HCT116 (cell line): ENCODE measurements at regions of chr18 and their contacts with region 1.

Region 1: GRCh38 chr18:48345596-48345995 is 63.6 kb downstream of the ZBTB7C start:
- DNase-seq: peak; percentile 12
- ATAC-seq: peak; percentile 75
- H3K4me3 ChIP-seq: no peak overlapping the region
- H3K27ac ChIP-seq: no peak overlapping the region
- H3K4me1 ChIP-seq: no peaks in the 10 kb centered on the region
- H3K27me3 ChIP-seq: no peaks in the 10 kb centered on the region
- CTCF ChIP-seq: peak; percentile 49 to 72 (median 56)
- POLR2A ChIP-seq: no peak
- RAD21 ChIP-seq: peak; percentile 77

Region 2: DNA sequence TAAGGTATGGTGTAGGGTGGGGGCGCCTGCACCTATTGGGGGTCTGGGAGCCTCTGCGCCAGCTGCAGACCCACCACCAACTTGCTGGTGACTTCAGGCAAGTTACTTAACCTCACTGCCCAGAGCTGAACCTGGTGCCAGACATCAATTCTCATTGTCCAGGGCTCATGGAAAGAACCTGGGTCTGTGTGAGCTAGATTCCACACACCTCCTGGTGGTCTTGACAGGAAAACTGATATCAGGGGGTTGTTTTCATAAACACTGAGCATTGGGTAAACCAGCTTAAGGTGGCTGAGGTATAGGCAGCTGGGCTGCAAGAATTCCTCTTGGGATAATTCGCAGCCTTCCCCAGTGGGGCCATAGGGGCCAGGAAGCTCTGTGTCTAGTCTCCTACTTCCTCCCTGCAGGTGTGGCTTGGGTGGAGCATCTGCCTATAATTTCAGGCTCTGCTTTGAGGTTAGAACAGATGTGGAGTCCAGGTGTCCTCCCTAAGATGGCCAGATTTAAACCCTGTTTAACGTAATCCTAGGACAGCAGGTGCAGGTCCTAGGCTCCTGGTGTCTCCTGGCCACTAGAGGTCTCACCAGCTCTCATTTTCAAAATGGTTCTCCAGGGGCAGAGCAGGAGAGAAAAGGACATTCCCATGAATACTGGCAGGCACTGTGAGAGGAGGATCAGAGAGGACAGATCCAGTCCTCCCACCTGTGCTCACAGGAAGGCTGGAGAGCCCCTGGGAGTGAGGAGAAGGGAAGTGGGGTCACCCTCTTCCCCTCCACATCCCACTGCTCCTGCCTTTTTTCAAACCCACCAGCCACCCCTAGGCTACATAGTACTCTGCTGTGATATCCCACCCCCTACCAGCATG is 314.7 kb before region 1 on chr18:
- CTCF ChIA-PET with region 1: interaction called, 3 read pairs
- POLR2A ChIA-PET with region 1: no interaction called
- RAD21 ChIA-PET with region 1: no interaction called
- intact Hi-C with region 1: loop called (anchors 5 kb)
- DNase-seq: peak; percentile 51
- ATAC-seq: peak; percentile 94
- H3K4me3 ChIP-seq: no peak overlapping the region
- H3K27ac ChIP-seq: no peak overlapping the region
- H3K4me1 ChIP-seq: peaks cover 6 to 9% of the 10 kb centered on the region in 2 experiments; a peak in 2 of 4 replicates
- H3K27me3 ChIP-seq: no peaks in the 10 kb centered on the region
- CTCF ChIP-seq: peak; percentile 75 to 88 (median 84)
- POLR2A ChIP-seq: no peak
- RAD21 ChIP-seq: peak; percentile 82